CD8-positive, alpha-beta T cell (primary cell): ENCODE measurements at regions of chr20 and their contacts with region 1.

Region 1: GRCh38 chr20:32535953-32536823 is 48.9 kb downstream of the NOL4L start:
- DNase-seq: peak; percentile 66 to 93 (median 79)
- ATAC-seq: peak; percentile 34
- H3K4me3 ChIP-seq: peak overlapping the region; percentile 33 to 49
- H3K4me3 Mint-ChIP-seq: peak overlapping the region; percentile 82
- H3K27ac ChIP-seq: peak overlapping the region; percentile 52 to 88
- H3K27ac Mint-ChIP-seq: peak overlapping the region; percentile 97
- H3K4me1 ChIP-seq: peaks cover 87% of the 10 kb centered on the region
- H3K4me1 Mint-ChIP-seq: peaks cover 87% of the 10 kb centered on the region
- H3K27me3 ChIP-seq: no peaks in the 10 kb centered on the region
- H3K27me3 Mint-ChIP-seq: no peaks in the 10 kb centered on the region
- CTCF ChIP-seq: no peak

Region 2: DNA sequence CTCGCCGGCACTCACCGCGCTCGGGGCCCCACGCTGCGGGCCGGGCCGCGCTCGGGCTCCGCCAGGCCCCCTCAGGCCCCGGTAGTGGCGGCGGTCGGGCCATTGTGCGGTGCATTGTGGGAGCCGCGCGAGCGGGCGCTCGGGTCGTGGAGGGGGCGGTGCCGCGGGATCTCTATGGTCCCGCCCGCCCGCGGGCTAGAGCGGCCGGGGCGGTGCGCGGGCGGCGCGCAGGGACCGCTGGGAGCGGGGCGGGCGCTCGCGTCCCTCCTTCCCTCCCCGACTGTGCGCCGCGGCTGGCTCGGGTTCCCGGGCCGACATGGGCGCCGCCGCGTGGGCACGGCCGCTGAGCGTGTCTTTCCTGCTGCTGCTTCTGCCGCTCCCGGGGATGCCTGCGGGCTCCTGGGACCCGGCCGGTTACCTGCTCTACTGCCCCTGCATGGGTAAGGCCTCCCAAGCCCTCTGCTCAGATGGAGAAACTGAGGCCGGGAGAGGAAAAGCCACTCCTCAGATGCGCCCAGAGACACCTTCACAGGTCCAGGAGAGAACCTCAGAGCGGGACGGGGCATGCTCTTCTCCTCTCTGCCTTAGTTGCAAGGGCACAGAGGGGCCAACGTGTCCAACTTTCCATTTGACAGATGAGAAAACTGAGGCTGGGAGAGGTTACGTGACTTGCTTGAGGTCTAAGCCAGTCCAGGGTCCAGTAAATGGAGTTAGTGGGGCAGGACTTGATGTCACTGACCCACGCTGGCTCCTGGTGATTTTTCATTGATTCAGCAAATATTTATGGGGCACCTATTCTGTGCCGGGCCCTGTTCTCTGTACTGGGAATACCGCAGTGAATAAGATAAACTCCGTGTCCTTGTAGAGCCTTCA is 328.3 kb before region 1 on chr20 and contains the starts of genes PLAGL2 and POFUT1:
- CTCF ChIA-PET with region 1: no interaction called
- POLR2A ChIA-PET with region 1: no interaction called
- intact Hi-C with region 1: loop called in 1 of 2 experiments (anchors 5 kb)
- DNase-seq: peak; percentile 73 to 94 (median 86)
- ATAC-seq: peak; percentile 96
- H3K4me3 ChIP-seq: peak within 1 kb of the TSS; percentile 84 to 86
- H3K4me3 Mint-ChIP-seq: peak within 1 kb of the TSS; percentile 94
- H3K27ac ChIP-seq: peak within 1 kb of the TSS; percentile 68 to 70
- H3K27ac Mint-ChIP-seq: peak within 1 kb of the TSS; percentile 92
- H3K4me1 ChIP-seq: peaks cover 53% of the 10 kb centered on the region
- H3K4me1 Mint-ChIP-seq: peaks cover 82% of the 10 kb centered on the region
- H3K27me3 ChIP-seq: no peaks in the 10 kb centered on the region
- H3K27me3 Mint-ChIP-seq: no peaks in the 10 kb centered on the region
- CTCF ChIP-seq: no peak
- total RNA-seq, gene PLAGL2: 15.8 to 16.9 TPM
- total RNA-seq, gene POFUT1: 5.1 to 6.3 TPM

Region 3: GRCh38 chr20:32387252-32387651 is 148.9 kb before region 1 on chr20:
- CTCF ChIA-PET with region 1: no interaction called
- POLR2A ChIA-PET with region 1: no interaction called
- intact Hi-C with region 1: no loop called
- DNase-seq: peak in 7 of 9 experiments; percentile 3 to 85 (median 36)
- ATAC-seq: peak; percentile 95
- H3K4me3 ChIP-seq: no peak overlapping the region
- H3K4me3 Mint-ChIP-seq: peak overlapping the region; percentile 3
- H3K27ac ChIP-seq: peak overlapping the region in 1 of 2 experiments; percentile 2
- H3K27ac Mint-ChIP-seq: peak overlapping the region; percentile 91
- H3K4me1 ChIP-seq: peaks cover 34% of the 10 kb centered on the region
- H3K4me1 Mint-ChIP-seq: peaks cover 65% of the 10 kb centered on the region
- H3K27me3 ChIP-seq: no peaks in the 10 kb centered on the region
- H3K27me3 Mint-ChIP-seq: no peaks in the 10 kb centered on the region
- CTCF ChIP-seq: no peak

Region 4: GRCh38 chr20:32509639-32510066 is 26.5 kb before region 1 on chr20:
- CTCF ChIA-PET with region 1: interaction called, 9 read pairs
- POLR2A ChIA-PET with region 1: interaction called, 17 read pairs
- intact Hi-C with region 1: loop called in 1 of 2 experiments (anchors 1 kb)
- DNase-seq: peak; percentile 46 to 90 (median 81)
- ATAC-seq: peak; percentile 78
- H3K4me3 ChIP-seq: peak overlapping the region; percentile 51 to 77
- H3K4me3 Mint-ChIP-seq: peak overlapping the region; percentile 88
- H3K27ac ChIP-seq: peak overlapping the region; percentile 69 to 72
- H3K27ac Mint-ChIP-seq: peak overlapping the region; percentile 97
- H3K4me1 ChIP-seq: peaks cover 70% of the 10 kb centered on the region
- H3K4me1 Mint-ChIP-seq: peaks cover 77% of the 10 kb centered on the region
- H3K27me3 ChIP-seq: no peaks in the 10 kb centered on the region
- H3K27me3 Mint-ChIP-seq: no peaks in the 10 kb centered on the region
- CTCF ChIP-seq: no peak

Region 5: GRCh38 chr20:32560989-32561830 is 25.0 kb after region 1 on chr20:
- CTCF ChIA-PET with region 1: interaction called, 5 read pairs
- POLR2A ChIA-PET with region 1: interaction called, 28 read pairs
- intact Hi-C with region 1: loop called in 1 of 2 experiments (anchors 2 kb)
- DNase-seq: peak in 1 of 9 experiments; percentile 54
- ATAC-seq: peak; percentile 66
- H3K4me3 ChIP-seq: no peak overlapping the region
- H3K4me3 Mint-ChIP-seq: peak overlapping the region; percentile 62
- H3K27ac ChIP-seq: peak overlapping the region; percentile 21 to 45
- H3K27ac Mint-ChIP-seq: peak overlapping the region; percentile 87
- H3K4me1 ChIP-seq: peaks cover 68% of the 10 kb centered on the region
- H3K4me1 Mint-ChIP-seq: peaks cover 62% of the 10 kb centered on the region
- H3K27me3 ChIP-seq: no peaks in the 10 kb centered on the region
- H3K27me3 Mint-ChIP-seq: no peaks in the 10 kb centered on the region
- CTCF ChIP-seq: no peak

Region 6: GRCh38 chr20:32585011-32585518 is 48.9 kb after region 1 on chr20 and contains the start of gene NOL4L:
- CTCF ChIA-PET with region 1: interaction called, 11 read pairs
- POLR2A ChIA-PET with region 1: interaction called, 21 read pairs
- intact Hi-C with region 1: loop called (anchors 1 to 2 kb)
- DNase-seq: peak in 8 of 9 experiments; percentile 24 to 70 (median 52)
- ATAC-seq: peak; percentile 25
- H3K4me3 ChIP-seq: peak within 1 kb of the TSS; percentile 59 to 74
- H3K4me3 Mint-ChIP-seq: peak within 1 kb of the TSS; percentile 93
- H3K27ac ChIP-seq: no peak within 1 kb of the TSS
- H3K27ac Mint-ChIP-seq: peak within 1 kb of the TSS; percentile 90
- H3K4me1 ChIP-seq: peaks cover 33% of the 10 kb centered on the region
- H3K4me1 Mint-ChIP-seq: peaks cover 42% of the 10 kb centered on the region
- H3K27me3 ChIP-seq: no peaks in the 10 kb centered on the region
- H3K27me3 Mint-ChIP-seq: no peaks in the 10 kb centered on the region
- CTCF ChIP-seq: no peak
- total RNA-seq, gene NOL4L: 39.1 to 39.7 TPM

Region 7: GRCh38 chr20:32638848-32639247 is 102.7 kb after region 1 on chr20:
- CTCF ChIA-PET with region 1: no interaction called
- POLR2A ChIA-PET with region 1: no interaction called
- intact Hi-C with region 1: no loop called
- DNase-seq: no peak
- ATAC-seq: no peak
- H3K4me3 ChIP-seq: no peak overlapping the region
- H3K4me3 Mint-ChIP-seq: no peak overlapping the region
- H3K27ac ChIP-seq: no peak overlapping the region
- H3K27ac Mint-ChIP-seq: no peak overlapping the region
- H3K4me1 ChIP-seq: no peaks in the 10 kb centered on the region
- H3K4me1 Mint-ChIP-seq: no peaks in the 10 kb centered on the region
- H3K27me3 ChIP-seq: no peaks in the 10 kb centered on the region
- H3K27me3 Mint-ChIP-seq: no peaks in the 10 kb centered on the region
- CTCF ChIP-seq: no peak